ENCODE measurements at regions of chr22 and their contacts with region 1.

Region 1: DNA sequence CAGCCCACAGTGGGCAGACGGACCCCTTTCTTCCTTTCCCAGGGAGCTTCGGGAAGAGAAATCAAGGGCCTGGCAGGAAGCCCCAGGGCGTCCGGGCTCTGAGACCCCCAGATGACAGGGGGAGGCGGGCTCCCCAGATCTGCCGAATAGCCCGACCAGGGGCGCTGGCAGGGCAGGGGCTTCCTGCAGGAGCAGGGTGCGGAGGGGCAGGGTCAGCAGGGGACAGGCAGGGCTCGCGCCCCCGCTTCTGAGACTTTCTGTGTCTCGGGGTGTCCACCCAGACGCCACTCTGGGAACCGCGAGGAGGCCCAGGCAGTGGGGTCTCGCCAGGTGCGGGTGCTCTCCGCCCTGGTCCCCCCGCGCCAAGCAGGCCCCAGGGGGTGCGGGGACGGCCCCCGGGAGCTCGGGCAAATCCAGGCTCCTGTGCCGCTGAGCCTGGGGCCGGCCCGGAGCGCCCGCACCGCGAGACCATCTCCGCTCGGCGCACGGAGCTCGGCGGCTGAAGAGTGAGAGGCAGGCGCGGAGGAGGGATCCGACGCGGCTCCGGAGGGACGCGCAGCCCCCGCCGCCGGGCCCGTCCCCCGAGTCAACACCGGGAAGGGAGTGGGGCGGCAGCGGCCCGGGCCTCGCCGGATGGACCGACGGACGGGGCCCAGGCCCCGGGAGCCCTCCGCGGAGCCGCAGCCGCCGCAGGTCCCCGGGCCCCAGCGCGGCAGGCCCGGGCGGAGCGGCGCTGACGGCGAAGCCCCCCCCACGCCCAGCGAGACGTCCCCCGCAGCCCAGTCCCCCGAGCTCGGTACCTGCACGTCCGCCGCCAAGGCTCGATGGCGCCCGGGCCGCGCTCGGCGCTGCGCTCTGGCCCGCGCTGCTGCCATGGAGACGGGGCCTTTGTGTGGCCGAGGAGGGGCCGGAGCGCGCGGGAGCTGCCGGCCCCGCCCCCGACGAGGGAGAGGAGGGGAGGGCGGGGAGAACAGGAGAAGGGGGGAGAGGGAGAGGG is at the start of gene PLXNB2:
- DNase-seq: peak; percentile 68
- ATAC-seq: no peak
- H3K4me3 ChIP-seq: peak within 1 kb of the TSS; percentile 90 to 95 (median 95)
- H3K27ac ChIP-seq: peak within 1 kb of the TSS; percentile 67
- H3K4me1 ChIP-seq: peaks cover 82% of the 10 kb centered on the region
- H3K27me3 ChIP-seq: no peaks in the 10 kb centered on the region
- CTCF ChIP-seq: no peak
- EP300 ChIP-seq: no peak
- POLR2A ChIP-seq: peak in 1 of 2 experiments; percentile 67; a peak in 2 of 4 replicates
- RAD21 ChIP-seq: no peak
- total RNA-seq, gene PLXNB2: 19.3 and 32.6 TPM in 2 replicates

Region 2: DNA sequence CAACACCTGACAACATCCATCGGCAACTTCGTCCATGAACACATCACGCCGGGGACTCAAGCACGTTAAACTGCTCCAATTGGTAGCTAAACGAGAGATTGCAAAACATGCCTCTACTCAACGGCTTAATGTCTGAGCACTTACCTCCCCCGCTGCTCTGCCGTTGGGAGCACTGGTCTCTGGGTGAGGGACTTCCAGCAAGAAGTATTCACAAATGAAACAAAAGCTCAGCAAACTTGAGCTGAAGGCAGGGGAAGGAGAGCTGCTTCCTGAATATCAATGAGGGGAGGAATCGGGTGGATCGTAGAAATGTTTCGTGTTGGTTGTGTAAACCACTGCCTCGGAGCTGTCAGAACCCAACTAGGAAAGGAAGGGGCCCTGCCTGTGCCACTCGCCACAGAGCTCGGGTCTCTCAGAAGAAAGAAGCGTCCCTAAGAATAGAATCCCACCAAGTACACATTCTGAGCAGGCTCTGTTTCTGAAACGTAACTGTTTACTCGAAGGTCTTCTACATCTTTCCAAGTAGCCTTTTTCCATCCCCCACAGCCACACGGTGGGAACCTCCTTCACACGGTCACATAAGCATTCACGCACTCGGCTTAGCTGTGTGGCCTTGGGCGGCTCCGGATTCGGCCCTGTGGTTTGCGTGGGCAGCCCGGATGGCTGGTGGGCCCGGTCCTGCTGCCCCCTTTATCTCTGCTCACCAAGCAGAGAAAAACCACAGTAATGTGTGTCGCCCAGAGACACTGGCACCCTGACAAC is 221.7 kb before region 1 on chr22 and contains the start of gene MLC1:
- CTCF ChIA-PET with region 1: no interaction called
- POLR2A ChIA-PET with region 1: no interaction called
- in situ Hi-C with region 1: no loop called
- intact Hi-C with region 1: no loop called
- DNase-seq: no peak
- ATAC-seq: no peak
- H3K4me3 ChIP-seq: no peak within 1 kb of the TSS
- H3K27ac ChIP-seq: no peak within 1 kb of the TSS
- H3K4me1 ChIP-seq: peaks cover 16% of the 10 kb centered on the region
- H3K27me3 ChIP-seq: peaks cover 1 to 45% of the 10 kb centered on the region in 2 experiments; a peak in 4 of 5 replicates
- CTCF ChIP-seq: no peak
- EP300 ChIP-seq: no peak
- POLR2A ChIP-seq: no peak
- RAD21 ChIP-seq: no peak
- total RNA-seq, gene MLC1: not detected in 2 replicates

Region 3: GRCh38 chr22:50260801-50261614 is 46.0 kb before region 1 on chr22:
- CTCF ChIA-PET with region 1: no interaction called
- POLR2A ChIA-PET with region 1: interaction called, 10 read pairs
- in situ Hi-C with region 1: no loop called
- intact Hi-C with region 1: no loop called
- DNase-seq: no peak
- ATAC-seq: peak; percentile 8
- H3K4me3 ChIP-seq: peak overlapping the region; percentile 54 to 74 (median 71); a peak in 5 of 6 replicates
- H3K27ac ChIP-seq: no peak overlapping the region
- H3K4me1 ChIP-seq: peaks cover 43% of the 10 kb centered on the region
- H3K27me3 ChIP-seq: peaks cover 10 to 27% of the 10 kb centered on the region in 2 experiments; a peak in 4 of 5 replicates
- CTCF ChIP-seq: no peak
- EP300 ChIP-seq: no peak
- POLR2A ChIP-seq: no peak
- RAD21 ChIP-seq: no peak

Region 4: DNA sequence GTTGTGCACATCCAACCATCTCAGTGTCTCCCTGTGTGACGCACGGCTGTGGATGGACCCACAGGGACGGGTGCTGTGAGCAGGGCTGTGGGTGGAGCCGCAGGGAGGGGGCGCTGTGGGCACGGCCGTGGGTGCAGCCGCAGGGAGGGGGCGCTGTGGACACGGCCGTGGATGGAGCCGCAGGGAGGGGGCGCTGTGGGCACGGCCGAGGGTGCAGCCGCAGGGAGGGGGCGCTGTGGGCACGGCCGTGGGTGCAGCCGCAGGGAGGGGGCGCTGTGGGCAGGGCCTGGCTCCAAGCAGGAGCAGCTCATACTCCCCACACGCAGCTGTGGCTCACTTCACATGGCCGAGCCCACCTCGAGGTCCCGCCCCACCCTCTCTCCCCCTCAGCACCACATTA is 30.9 kb before region 1 on chr22:
- CTCF ChIA-PET with region 1: interaction called, 12 read pairs
- POLR2A ChIA-PET with region 1: interaction called, 7 read pairs
- in situ Hi-C with region 1: no loop called
- intact Hi-C with region 1: no loop called
- DNase-seq: peak; percentile 16
- ATAC-seq: peak; percentile 27
- H3K4me3 ChIP-seq: no peak overlapping the region
- H3K27ac ChIP-seq: no peak overlapping the region
- H3K4me1 ChIP-seq: peaks cover 11% of the 10 kb centered on the region
- H3K27me3 ChIP-seq: peaks cover 0 to 3% of the 10 kb centered on the region in 2 experiments; a peak in 3 of 5 replicates
- CTCF ChIP-seq: peak; percentile 75
- EP300 ChIP-seq: no peak
- POLR2A ChIP-seq: no peak
- RAD21 ChIP-seq: peak; percentile 21; the same call in 1 of the 2 replicates

Region 5: DNA sequence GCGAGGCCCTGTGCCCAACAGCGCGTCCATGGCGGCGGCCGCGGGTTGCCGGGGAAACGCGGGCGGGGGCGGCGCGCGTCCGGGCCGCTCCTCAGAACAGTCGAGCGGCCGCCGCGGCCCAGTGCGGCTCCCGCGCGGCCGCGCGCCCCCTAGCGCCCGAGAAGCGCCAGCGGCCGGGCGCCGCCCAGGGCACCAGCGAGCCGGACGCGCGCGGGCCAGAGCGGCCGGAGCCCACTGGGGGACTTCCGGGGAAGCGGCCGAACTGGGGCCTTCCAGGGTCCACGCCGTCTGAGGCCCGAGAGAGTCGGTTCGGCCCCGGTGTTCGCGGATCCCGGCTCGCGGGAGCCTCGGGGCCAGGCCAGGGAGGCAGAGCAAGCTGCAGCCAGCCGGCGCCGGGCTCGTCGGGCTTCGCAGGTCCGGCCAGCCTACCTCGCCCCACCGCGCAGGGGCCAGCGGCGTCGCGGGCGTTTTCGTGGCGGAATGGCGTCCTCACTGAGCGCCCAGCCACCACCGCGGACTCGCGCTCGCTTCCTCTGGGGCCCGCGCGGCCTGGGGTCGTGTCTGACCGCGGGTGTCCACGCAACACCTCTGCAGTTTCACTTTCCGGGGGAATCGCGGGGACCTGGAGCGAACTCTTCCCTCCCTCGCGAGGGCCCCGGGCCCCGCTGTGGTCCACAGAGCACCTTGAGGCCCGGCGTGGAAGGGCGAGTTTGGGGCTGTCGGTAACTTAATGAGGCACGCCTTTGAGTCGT is 20.1 kb after region 1 on chr22 and contains the start of gene DENND6B:
- CTCF ChIA-PET with region 1: interaction called, 3 read pairs
- POLR2A ChIA-PET with region 1: interaction called, 8 read pairs
- in situ Hi-C with region 1: no loop called
- intact Hi-C with region 1: loop called (anchors 2 kb)
- DNase-seq: peak; percentile 45
- ATAC-seq: peak; percentile 81
- H3K4me3 ChIP-seq: peak within 1 kb of the TSS; percentile 69 to 83 (median 81)
- H3K27ac ChIP-seq: peak within 1 kb of the TSS; percentile 77
- H3K4me1 ChIP-seq: peaks cover 65% of the 10 kb centered on the region
- H3K27me3 ChIP-seq: no peaks in the 10 kb centered on the region; a peak in 1 of 5 replicates
- CTCF ChIP-seq: peak; percentile 54; the same call in 1 of the 2 replicates
- EP300 ChIP-seq: no peak
- POLR2A ChIP-seq: peak; percentile 75 to 77
- RAD21 ChIP-seq: peak; percentile 99
- total RNA-seq, gene DENND6B: 0.84 and 0.95 TPM in 2 replicates

Region 6: DNA sequence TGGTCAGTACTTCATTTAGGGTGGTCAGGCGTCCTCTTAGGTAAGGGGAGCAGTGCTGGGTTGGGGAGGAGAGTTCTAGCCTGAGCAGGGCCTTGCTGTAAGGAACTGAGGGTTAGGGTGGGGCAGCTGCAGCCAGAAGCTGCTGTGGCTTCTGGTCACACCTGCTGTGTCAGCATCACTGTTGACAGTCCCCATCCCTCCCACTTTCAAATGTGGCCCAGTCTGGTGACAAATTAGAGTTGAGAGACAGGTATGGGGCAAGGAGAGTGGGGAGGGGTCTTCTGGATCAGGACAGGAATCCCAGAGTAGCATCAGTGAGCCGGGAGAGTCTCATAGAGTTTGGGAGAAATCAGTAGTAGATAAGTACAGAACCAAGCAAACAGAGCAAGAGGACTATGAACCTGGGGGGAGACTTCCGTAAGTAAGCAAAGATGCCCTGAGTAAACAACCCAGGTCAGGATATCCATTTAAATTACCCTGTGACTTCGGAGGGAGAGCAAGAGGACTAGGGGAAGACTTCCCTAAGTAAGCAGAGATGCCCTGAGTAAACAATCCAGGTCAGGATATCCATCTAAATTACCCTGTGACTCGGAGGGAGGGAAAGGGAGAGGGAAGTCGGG is 89.8 kb after region 1 on chr22:
- CTCF ChIA-PET with region 1: no interaction called
- POLR2A ChIA-PET with region 1: no interaction called
- in situ Hi-C with region 1: no loop called
- intact Hi-C with region 1: no loop called
- DNase-seq: peak; percentile 97
- ATAC-seq: peak; percentile 84
- H3K4me3 ChIP-seq: peak overlapping the region in 2 of 3 experiments; percentile 19 to 42; a peak in 3 of 6 replicates
- H3K27ac ChIP-seq: peak overlapping the region; percentile 68
- H3K4me1 ChIP-seq: peaks cover 87% of the 10 kb centered on the region
- H3K27me3 ChIP-seq: no peaks in the 10 kb centered on the region
- CTCF ChIP-seq: no peak
- EP300 ChIP-seq: peak in 1 of 2 experiments; percentile 97; a peak in 2 of 4 replicates
- POLR2A ChIP-seq: no peak
- RAD21 ChIP-seq: no peak

Measured in HepG2 (cell line).